ENCODE measurements at regions of chr3 and their contacts with region 1.

Region 1: GRCh38 chr3:112990672-112991602 is at the start of gene GTPBP8:
- DNase-seq: peak; percentile 68 to 93 (median 80)
- ATAC-seq: peak; percentile 89
- H3K4me3 ChIP-seq: peak within 1 kb of the TSS; percentile 74
- H3K4me3 Mint-ChIP-seq: peak within 1 kb of the TSS; percentile 97
- H3K27ac ChIP-seq: peak within 1 kb of the TSS; percentile 85 to 96
- H3K27ac Mint-ChIP-seq: peak within 1 kb of the TSS; percentile 93
- H3K4me1 ChIP-seq: peaks cover 26% of the 10 kb centered on the region
- H3K4me1 Mint-ChIP-seq: peaks cover 81% of the 10 kb centered on the region
- H3K27me3 ChIP-seq: no peaks in the 10 kb centered on the region
- H3K27me3 Mint-ChIP-seq: no peaks in the 10 kb centered on the region
- CTCF ChIP-seq: no peak
- total RNA-seq, gene GTPBP8: 27.0 to 30.3 TPM

Region 2: GRCh38 chr3:112925969-112926368 is 65.0 kb before region 1 on chr3:
- CTCF ChIA-PET with region 1: no interaction called
- POLR2A ChIA-PET with region 1: no interaction called
- intact Hi-C with region 1: no loop called
- DNase-seq: no peak
- ATAC-seq: no peak
- H3K4me3 ChIP-seq: no peak overlapping the region
- H3K4me3 Mint-ChIP-seq: no peak overlapping the region
- H3K27ac ChIP-seq: no peak overlapping the region
- H3K27ac Mint-ChIP-seq: peak overlapping the region; percentile 46
- H3K4me1 ChIP-seq: no peaks in the 10 kb centered on the region
- H3K4me1 Mint-ChIP-seq: peaks cover 39% of the 10 kb centered on the region
- H3K27me3 ChIP-seq: no peaks in the 10 kb centered on the region
- H3K27me3 Mint-ChIP-seq: no peaks in the 10 kb centered on the region
- CTCF ChIP-seq: no peak

Region 3: DNA sequence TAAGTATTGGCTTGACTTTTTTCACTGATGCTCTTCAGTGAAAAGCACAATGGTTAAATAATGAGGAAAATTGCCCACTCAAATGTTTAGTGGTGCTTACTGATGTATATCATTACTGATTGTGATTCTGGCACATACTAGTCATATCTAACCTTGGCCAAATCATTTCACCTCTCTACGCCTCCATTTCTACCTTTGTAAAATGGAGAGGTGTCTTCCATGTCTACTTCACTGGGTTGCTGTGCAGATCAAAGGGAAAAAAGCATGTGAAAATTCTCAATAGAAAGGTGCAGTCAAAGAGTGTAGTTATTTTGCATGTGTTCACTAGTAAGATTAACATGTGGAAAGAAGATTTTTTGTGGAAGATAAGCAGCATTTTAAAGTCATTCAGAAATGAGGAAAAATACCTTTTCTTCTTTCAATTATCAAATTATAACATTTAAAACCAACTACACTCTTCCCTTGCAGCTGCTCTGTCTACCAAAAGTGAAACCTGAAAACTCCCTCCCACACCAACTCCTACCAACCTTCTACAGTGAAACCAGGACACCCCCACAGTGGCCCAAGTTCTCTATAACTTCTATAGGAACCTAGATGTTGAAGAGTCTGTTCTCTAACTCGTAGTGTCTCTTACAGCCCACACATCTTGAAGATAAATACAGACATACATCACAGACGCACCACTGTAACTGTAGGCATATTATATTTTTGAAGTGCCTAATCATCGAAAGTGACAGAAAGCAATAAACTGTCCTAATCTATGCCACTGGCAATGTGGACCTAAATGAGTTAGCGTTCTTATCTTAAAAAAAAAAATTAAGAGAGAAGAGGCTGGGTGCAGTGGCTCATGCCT is 17.4 kb before region 1 on chr3:
- CTCF ChIA-PET with region 1: interaction called, 32 read pairs
- POLR2A ChIA-PET with region 1: interaction called, 16 read pairs
- intact Hi-C with region 1: loop called in 1 of 2 experiments (anchors 2 kb)
- DNase-seq: peak in 7 of 14 experiments; percentile 13 to 69 (median 50)
- ATAC-seq: peak; percentile 81
- H3K4me3 ChIP-seq: peak overlapping the region; percentile 65
- H3K4me3 Mint-ChIP-seq: peak overlapping the region; percentile 92
- H3K27ac ChIP-seq: peak overlapping the region; percentile 65 to 69
- H3K27ac Mint-ChIP-seq: peak overlapping the region; percentile 94
- H3K4me1 ChIP-seq: peaks cover 34% of the 10 kb centered on the region
- H3K4me1 Mint-ChIP-seq: peaks cover 94% of the 10 kb centered on the region
- H3K27me3 ChIP-seq: no peaks in the 10 kb centered on the region
- H3K27me3 Mint-ChIP-seq: no peaks in the 10 kb centered on the region
- CTCF ChIP-seq: no peak

Region 4: GRCh38 chr3:112979240-112979832 is 11.6 kb before region 1 on chr3:
- CTCF ChIA-PET with region 1: interaction called, 32 read pairs
- POLR2A ChIA-PET with region 1: interaction called, 16 read pairs
- intact Hi-C with region 1: no loop called
- DNase-seq: peak in 4 of 14 experiments; percentile 39 to 77 (median 72)
- ATAC-seq: no peak
- H3K4me3 ChIP-seq: no peak overlapping the region
- H3K4me3 Mint-ChIP-seq: peak overlapping the region; percentile 1
- H3K27ac ChIP-seq: no peak overlapping the region
- H3K27ac Mint-ChIP-seq: peak overlapping the region; percentile 6
- H3K4me1 ChIP-seq: peaks cover 36% of the 10 kb centered on the region
- H3K4me1 Mint-ChIP-seq: peaks cover 73% of the 10 kb centered on the region
- H3K27me3 ChIP-seq: no peaks in the 10 kb centered on the region
- H3K27me3 Mint-ChIP-seq: no peaks in the 10 kb centered on the region
- CTCF ChIP-seq: peak; percentile 94

Region 5: DNA sequence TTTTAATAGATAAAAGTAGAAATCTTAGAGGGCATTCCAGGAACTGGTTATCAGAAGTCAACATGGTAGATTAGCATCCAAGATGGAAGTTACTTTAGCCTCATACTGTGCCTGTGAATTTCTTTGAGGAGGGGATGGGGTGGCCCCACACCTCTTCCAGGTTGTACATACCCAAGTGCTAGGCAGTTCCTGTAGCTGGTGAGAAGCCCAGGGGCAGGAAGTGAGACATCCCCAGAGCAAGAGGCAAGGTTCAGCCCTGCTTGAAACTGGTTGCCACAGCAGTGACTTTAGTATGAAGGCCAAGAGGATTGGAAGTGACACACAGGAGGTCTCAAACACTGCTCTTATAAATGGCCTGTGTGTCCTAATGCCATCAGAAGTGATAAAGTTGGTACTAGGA is 11.7 kb after region 1 on chr3:
- CTCF ChIA-PET with region 1: interaction called, 3 read pairs
- POLR2A ChIA-PET with region 1: interaction called, 33 read pairs
- intact Hi-C with region 1: loop called in 1 of 2 experiments (anchors 1 kb)
- DNase-seq: peak in 13 of 14 experiments; percentile 20 to 74 (median 44)
- ATAC-seq: peak; percentile 47
- H3K4me3 ChIP-seq: no peak overlapping the region
- H3K4me3 Mint-ChIP-seq: peak overlapping the region; percentile 59
- H3K27ac ChIP-seq: peak overlapping the region; percentile 22 to 52
- H3K27ac Mint-ChIP-seq: peak overlapping the region; percentile 90
- H3K4me1 ChIP-seq: peaks cover 27% of the 10 kb centered on the region
- H3K4me1 Mint-ChIP-seq: peaks cover 90% of the 10 kb centered on the region
- H3K27me3 ChIP-seq: no peaks in the 10 kb centered on the region
- H3K27me3 Mint-ChIP-seq: no peaks in the 10 kb centered on the region
- CTCF ChIP-seq: no peak

Measured in CD4-positive, alpha-beta T cell (primary cell).